GM23248 (cell line): ENCODE measurements at regions of chr15 and their contacts with region 1.

Region 1: GRCh38 chr15:60585743-60586708 is 107.1 kb upstream of the ICE2 start:
- DNase-seq: peak; percentile 89
- H3K4me3 ChIP-seq: no peak overlapping the region
- H3K27ac ChIP-seq: no peak overlapping the region
- H3K4me1 ChIP-seq: peaks cover 22% of the 10 kb centered on the region
- H3K27me3 ChIP-seq: no peaks in the 10 kb centered on the region

Region 2: DNA sequence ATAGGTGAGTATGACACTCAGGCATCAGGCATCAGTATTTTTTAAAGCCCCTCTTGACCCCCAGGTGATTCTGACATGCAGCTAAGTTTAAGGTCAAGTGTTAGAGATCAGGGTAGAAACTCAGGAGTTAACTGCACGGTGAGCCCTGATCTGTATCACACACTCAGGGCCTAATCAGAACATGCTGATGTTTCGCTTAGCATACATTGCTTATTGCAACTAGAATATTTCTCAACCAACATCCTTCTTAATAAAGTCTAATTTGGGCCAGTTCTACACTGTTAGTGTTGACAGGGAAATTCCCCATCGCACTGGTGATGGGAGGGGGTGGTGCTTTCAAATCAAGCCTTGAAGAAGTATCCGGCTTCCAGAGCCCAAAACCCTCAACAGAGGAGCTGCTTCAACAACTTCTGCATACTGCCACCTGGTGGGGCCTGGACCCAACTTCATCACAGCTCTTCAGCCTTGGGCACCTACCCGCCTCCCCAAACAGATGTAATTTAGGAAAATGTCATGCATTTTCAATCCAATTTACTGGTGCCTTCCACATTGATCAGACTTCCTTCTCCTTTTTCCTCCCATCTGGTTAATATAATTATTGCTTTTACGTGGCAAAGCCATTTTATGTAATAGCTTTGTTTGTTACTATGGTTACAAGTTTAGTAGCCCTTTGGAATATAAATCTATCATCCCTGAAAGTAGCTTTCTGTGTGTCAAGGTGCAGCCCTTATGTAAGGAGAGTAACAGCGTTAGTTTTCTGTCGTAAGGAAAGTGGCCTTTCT is 330.8 kb after region 1 on chr15:
- in situ Hi-C with region 1: loop called (anchors 10 kb)
- DNase-seq: peak; percentile 90
- H3K4me3 ChIP-seq: peak overlapping the region; percentile 36
- H3K27ac ChIP-seq: peak overlapping the region; percentile 4
- H3K4me1 ChIP-seq: peaks cover 12% of the 10 kb centered on the region
- H3K27me3 ChIP-seq: no peaks in the 10 kb centered on the region

Region 3: GRCh38 chr15:61051569-61052031 is 465.6 kb after region 1 on chr15:
- in situ Hi-C with region 1: loop called (anchors 10 kb)
- DNase-seq: peak; percentile 85
- H3K4me3 ChIP-seq: no peak overlapping the region
- H3K27ac ChIP-seq: no peak overlapping the region
- H3K4me1 ChIP-seq: peaks cover 10% of the 10 kb centered on the region; the same call in 1 of the 2 replicates
- H3K27me3 ChIP-seq: no peaks in the 10 kb centered on the region

Region 4: GRCh38 chr15:61327019-61327631 is 741.1 kb after region 1 on chr15:
- in situ Hi-C with region 1: no loop called
- DNase-seq: no peak
- H3K4me3 ChIP-seq: no peak overlapping the region
- H3K27ac ChIP-seq: no peak overlapping the region
- H3K4me1 ChIP-seq: no peaks in the 10 kb centered on the region
- H3K27me3 ChIP-seq: no peaks in the 10 kb centered on the region

Region 5: GRCh38 chr15:61834076-61834697 is 1248.2 kb after region 1 on chr15:
- in situ Hi-C with region 1: loop called (anchors 10 kb)
- DNase-seq: peak; percentile 82
- H3K4me3 ChIP-seq: no peak overlapping the region
- H3K27ac ChIP-seq: no peak overlapping the region
- H3K4me1 ChIP-seq: no peaks in the 10 kb centered on the region
- H3K27me3 ChIP-seq: no peaks in the 10 kb centered on the region